ENCODE measurements at regions of chr1 and their contacts with region 1.

Region 1: GRCh38 chr1:25476186-25477097 is 45.7 kb downstream of the MACO1 start:
- DNase-seq: no peak
- H3K4me3 Mint-ChIP-seq: no peak overlapping the region
- H3K27ac Mint-ChIP-seq: peak overlapping the region; percentile 18
- H3K4me1 Mint-ChIP-seq: peaks cover 42% of the 10 kb centered on the region
- H3K27me3 Mint-ChIP-seq: no peaks in the 10 kb centered on the region

Region 2: DNA sequence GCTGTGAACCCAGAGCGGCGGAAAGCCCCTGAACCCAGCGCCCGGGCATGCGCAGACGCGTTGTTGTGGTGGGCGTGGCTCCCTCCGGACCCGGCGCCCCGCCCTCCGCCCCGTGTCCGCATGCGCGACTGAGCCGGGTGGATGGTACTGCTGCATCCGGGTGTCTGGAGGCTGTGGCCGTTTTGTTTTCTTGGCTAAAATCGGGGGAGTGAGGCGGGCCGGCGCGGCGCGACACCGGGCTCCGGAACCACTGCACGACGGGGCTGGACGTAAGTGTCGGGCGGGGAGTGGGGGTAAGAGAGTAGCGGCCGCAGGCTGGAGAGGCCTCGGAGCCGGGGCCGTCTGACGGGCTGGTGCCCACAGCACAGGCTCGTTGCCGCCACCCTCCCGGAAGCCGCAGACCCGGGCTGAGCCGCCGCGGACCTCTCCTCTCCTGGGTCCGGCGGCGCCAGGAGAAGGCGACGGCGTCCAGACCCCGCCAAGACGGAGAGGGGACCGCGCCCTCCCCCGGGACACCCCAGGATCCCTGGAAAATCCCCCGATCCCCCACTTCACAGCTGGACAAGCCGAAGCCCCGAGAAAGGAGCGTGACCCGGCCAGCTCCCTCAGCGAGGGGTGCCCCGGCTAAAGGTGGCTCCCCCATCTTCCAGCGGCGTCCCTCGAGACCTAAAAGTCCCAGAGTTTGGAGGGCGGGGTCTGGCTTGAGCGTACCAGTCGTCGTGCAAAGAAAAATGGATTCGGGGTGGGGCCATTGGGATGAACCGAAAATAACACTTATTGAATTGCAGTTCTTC is 138.1 kb before region 1 on chr1 and contains the start of gene TMEM50A:
- CTCF ChIA-PET with region 1: no interaction called
- POLR2A ChIA-PET with region 1: no interaction called
- intact Hi-C with region 1: no loop called
- DNase-seq: peak; percentile 93
- H3K4me3 Mint-ChIP-seq: peak within 1 kb of the TSS; percentile 88
- H3K27ac Mint-ChIP-seq: peak within 1 kb of the TSS; percentile 87
- H3K4me1 Mint-ChIP-seq: peaks cover 29% of the 10 kb centered on the region
- H3K27me3 Mint-ChIP-seq: no peaks in the 10 kb centered on the region
- total RNA-seq, gene TMEM50A: 124 to 128 TPM

Region 3: DNA sequence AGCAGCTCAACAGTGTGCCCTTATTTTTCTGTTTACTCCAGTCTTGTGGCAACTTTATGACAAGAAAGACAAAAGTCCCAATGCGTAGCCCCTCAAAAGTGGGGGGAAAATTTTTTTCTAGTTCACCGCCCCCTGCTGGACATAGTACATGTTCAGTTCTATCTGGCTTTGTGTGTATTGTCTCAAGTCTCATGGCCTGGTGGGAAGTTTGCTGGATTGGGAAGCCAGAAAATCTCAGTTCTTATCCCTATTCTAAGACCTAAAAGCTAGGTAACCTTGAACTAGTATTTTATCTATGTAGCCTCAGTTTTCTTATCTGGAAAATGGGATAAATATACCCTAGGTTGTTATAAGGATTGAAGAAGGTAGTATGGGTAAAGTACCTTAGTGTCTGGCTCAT is 11.2 kb after region 1 on chr1:
- CTCF ChIA-PET with region 1: interaction called, 42 read pairs
- POLR2A ChIA-PET with region 1: no interaction called
- intact Hi-C with region 1: no loop called
- DNase-seq: peak; percentile 44
- H3K4me3 Mint-ChIP-seq: no peak overlapping the region
- H3K27ac Mint-ChIP-seq: no peak overlapping the region
- H3K4me1 Mint-ChIP-seq: no peaks in the 10 kb centered on the region
- H3K27me3 Mint-ChIP-seq: no peaks in the 10 kb centered on the region

Region 4: DNA sequence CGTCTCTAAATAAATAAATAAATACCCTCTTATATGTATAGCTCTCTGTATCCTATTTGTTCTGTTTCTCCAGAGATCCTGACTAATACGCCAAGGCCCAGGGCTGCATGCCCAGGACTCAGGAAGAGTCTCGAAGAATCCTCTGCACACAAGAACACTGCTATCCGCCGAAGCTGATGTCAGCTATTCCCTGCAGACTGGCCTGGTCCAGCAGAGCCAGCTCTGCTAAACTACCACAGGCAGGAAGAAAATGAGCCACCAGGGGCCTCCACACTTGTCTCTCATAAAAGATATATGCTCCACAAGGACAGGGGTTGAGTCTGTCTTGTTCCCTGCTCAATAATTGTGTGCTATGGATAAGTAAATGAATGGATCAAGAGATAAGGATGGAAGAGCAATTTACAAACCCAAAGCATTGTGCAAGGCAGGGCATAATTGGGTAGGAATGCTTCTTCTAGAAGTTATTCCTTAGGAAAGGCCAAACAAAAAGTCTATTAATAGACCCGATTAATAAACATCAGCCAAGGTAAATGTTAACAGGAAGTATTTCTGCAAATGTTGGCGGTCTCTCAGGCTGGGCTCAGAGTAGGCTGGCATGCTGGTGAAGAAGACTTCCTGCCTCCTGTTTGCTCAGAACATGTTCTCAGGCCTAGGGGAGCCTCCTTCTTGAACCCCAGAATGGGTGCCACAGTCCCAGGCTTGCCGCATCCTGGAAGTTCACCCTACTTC is 113.8 kb after region 1 on chr1:
- CTCF ChIA-PET with region 1: no interaction called
- POLR2A ChIA-PET with region 1: no interaction called
- intact Hi-C with region 1: no loop called
- DNase-seq: no peak
- H3K4me3 Mint-ChIP-seq: no peak overlapping the region
- H3K27ac Mint-ChIP-seq: no peak overlapping the region
- H3K4me1 Mint-ChIP-seq: peaks cover 13% of the 10 kb centered on the region
- H3K27me3 Mint-ChIP-seq: no peaks in the 10 kb centered on the region

Measured in activated CD4-positive, alpha-beta memory T cell treated with anti-CD3 and anti-CD28 coated beads for 36 hours (primary cell).